Naive thymus-derived CD4-positive, alpha-beta T cell (primary cell): ENCODE measurements at regions of chr7 and their contacts with region 1.

Region 1: GRCh38 chr7:152436111-152436930 is 518 bp upstream of the KMT2C start:
- DNase-seq: peak; percentile 79 to 92 (median 87)
- ATAC-seq: peak; percentile 87
- H3K4me3 ChIP-seq: peak overlapping the region; percentile 75
- H3K4me3 Mint-ChIP-seq: peak overlapping the region; percentile 79 to 93 (median 88)
- H3K27ac ChIP-seq: peak overlapping the region; percentile 97
- H3K27ac Mint-ChIP-seq: peak overlapping the region; percentile 85 to 97 (median 93)
- H3K4me1 ChIP-seq: peaks cover 5 to 7% of the 10 kb centered on the region in 2 donors
- H3K4me1 Mint-ChIP-seq: peaks cover 15 to 35% (median 24%) of the 10 kb centered on the region in 7 donors
- H3K27me3 ChIP-seq: no peaks in the 10 kb centered on the region
- H3K27me3 Mint-ChIP-seq: no peaks in the 10 kb centered on the region

Region 2: DNA sequence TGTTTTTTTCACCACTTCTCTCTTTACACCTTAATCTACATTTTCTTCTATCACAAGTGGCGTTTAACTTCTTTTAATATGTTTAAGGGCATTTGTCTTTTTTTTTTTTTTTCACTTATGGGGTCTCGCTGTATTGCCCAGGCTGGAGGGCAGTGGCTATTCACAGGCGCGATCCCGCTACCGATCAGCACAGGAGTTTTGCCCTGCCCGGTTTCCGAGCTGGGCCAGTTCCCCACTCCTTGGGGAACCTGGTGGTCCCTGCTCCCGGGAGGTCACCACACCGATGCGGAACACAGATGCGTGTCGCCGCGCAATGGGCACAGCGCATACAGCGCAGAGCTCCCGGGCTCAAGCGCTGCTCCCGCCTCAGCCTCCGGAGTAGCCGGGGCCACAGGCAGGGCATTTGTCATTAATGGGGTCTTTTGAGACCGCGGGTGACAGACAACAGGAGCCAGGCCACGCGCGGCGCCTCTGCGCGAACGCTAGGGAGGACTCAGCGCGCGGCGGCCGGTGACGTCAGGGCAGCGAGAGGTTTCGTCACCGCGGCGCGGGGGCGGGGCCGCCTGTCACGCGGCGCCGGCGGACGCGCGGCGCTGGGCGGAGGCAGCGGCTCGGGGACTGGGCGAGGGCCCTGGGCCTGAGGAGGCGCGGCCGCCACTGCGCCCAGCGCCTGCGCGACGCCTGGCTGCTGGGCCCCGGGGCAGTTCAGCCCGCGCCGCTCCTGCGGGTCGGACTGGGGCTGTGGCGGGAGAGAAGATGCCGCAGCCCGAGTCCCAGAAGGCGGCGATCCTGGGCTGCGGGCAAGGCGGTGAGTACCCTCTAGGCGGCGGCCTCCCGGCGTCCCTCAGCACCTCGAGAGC is 411.0 kb before region 1 on chr7 and contains the start of gene GALNT11:
- CTCF ChIA-PET with region 1: no interaction called
- POLR2A ChIA-PET with region 1: no interaction called
- intact Hi-C with region 1: loop called in 1 of 2 experiments (anchors 10 kb)
- DNase-seq: peak; percentile 82 to 95 (median 91)
- ATAC-seq: peak; percentile 96
- H3K4me3 ChIP-seq: peak within 1 kb of the TSS; percentile 75
- H3K4me3 Mint-ChIP-seq: peak within 1 kb of the TSS; percentile 85 to 92 (median 88)
- H3K27ac ChIP-seq: peak within 1 kb of the TSS; percentile 88
- H3K27ac Mint-ChIP-seq: peak within 1 kb of the TSS; percentile 85 to 96 (median 95)
- H3K4me1 ChIP-seq: peaks cover 7 to 22% of the 10 kb centered on the region in 2 donors
- H3K4me1 Mint-ChIP-seq: peaks cover 12 to 45% (median 39%) of the 10 kb centered on the region in 7 donors
- H3K27me3 ChIP-seq: no peaks in the 10 kb centered on the region
- H3K27me3 Mint-ChIP-seq: peaks cover 0 to 11% (median 0%) of the 10 kb centered on the region in 5 donors
- total RNA-seq, gene GALNT11: 16.0 to 29.5 (median 17.9) TPM

Region 3: GRCh38 chr7:152383341-152384234 is 52.7 kb before region 1 on chr7:
- CTCF ChIA-PET with region 1: no interaction called
- POLR2A ChIA-PET with region 1: no interaction called
- intact Hi-C with region 1: loop called in 1 of 2 experiments (anchors 5 kb)
- DNase-seq: no peak
- ATAC-seq: peak; percentile 53
- H3K4me3 ChIP-seq: no peak overlapping the region
- H3K4me3 Mint-ChIP-seq: no peak overlapping the region
- H3K27ac ChIP-seq: no peak overlapping the region
- H3K27ac Mint-ChIP-seq: no peak overlapping the region
- H3K4me1 ChIP-seq: no peaks in the 10 kb centered on the region
- H3K4me1 Mint-ChIP-seq: peaks cover 4 to 37% (median 23%) of the 10 kb centered on the region in 7 donors
- H3K27me3 ChIP-seq: no peaks in the 10 kb centered on the region
- H3K27me3 Mint-ChIP-seq: no peaks in the 10 kb centered on the region

Region 4: DNA sequence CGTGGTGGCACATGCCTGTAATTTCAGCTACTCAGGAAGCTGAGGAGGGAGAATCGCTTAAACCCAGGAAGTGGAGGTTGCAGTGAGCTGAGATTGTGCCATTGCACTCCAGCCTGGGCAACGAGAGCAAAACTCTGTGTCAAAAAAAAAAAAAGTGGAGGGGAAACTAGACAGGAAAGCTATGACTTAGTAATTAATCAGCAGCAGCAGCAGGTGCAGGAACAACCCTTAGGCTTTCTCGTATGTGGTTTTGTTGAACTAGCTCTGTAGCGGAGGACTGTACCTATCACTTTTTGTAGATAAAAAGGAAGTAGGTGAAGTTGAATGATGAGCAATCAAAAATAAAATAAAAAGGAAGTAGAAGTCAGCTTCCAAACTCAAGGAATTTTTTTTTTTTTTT is 76.4 kb after region 1 on chr7:
- CTCF ChIA-PET with region 1: no interaction called
- POLR2A ChIA-PET with region 1: no interaction called
- intact Hi-C with region 1: loop called in 1 of 2 experiments (anchors 1 kb)
- DNase-seq: peak in 7 of 9 donors; percentile 19 to 54 (median 31)
- ATAC-seq: peak; percentile 79
- H3K4me3 ChIP-seq: peak overlapping the region; percentile 39
- H3K4me3 Mint-ChIP-seq: peak overlapping the region; percentile 58 to 87 (median 78)
- H3K27ac ChIP-seq: peak overlapping the region; percentile 2
- H3K27ac Mint-ChIP-seq: peak overlapping the region in 7 of 9 donors; percentile 15 to 77 (median 51)
- H3K4me1 ChIP-seq: peaks cover 0 to 4% of the 10 kb centered on the region in 2 donors
- H3K4me1 Mint-ChIP-seq: peaks cover 4 to 20% (median 13%) of the 10 kb centered on the region in 7 donors
- H3K27me3 ChIP-seq: no peaks in the 10 kb centered on the region
- H3K27me3 Mint-ChIP-seq: peaks cover 0 to 4% (median 0%) of the 10 kb centered on the region in 5 donors

Region 5: DNA sequence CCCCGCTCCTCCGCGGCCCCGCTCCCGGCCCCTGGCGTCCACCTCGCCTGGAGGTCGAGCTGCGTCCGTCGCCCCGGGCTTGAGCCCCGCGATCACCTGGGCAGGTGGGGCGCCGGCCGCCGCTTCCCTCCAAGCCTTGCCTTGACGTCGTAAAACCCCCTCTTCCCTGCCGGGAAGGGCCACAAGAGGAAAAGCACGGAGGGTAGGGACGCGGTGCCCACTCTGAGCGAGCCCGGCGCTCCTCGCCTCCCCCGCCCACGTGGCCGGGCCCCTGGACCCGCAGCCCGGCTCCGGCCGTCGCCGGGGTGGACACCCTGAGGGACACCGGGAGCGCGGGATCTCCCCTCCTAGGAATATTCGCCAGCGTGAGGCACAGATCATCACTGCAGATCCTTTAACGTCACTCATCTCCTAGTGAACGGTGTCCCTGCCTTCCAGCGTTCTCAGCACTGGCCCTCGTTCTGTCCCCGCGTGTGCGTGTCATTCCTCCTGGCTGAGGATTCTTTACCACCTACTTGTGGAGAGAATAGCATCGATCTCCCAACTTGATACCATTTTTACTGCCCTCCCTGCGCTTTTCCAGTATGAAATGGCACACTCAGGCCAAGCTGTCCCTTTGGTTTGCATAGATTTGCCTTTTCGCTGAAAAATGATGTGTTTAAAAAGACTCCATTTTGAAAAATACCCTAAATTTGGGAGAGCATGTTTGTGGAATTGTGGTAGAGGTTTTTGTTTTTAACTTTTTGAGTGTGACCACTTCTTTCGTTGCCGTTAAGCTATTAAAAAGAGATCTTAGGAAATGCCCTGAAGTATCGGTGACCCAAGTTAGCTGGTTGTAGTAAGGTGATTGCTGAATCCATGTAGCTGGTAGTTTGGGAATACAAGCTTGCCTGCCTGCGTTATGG is 323.9 kb after region 1 on chr7:
- CTCF ChIA-PET with region 1: no interaction called
- POLR2A ChIA-PET with region 1: no interaction called
- intact Hi-C with region 1: loop called (anchors 1 kb)
- DNase-seq: peak in 5 of 9 donors; percentile 12 to 53 (median 22)
- ATAC-seq: peak; percentile 26
- H3K4me3 ChIP-seq: peak overlapping the region; percentile 68
- H3K4me3 Mint-ChIP-seq: peak overlapping the region; percentile 85 to 94 (median 90)
- H3K27ac ChIP-seq: peak overlapping the region; percentile 93
- H3K27ac Mint-ChIP-seq: peak overlapping the region; percentile 63 to 97 (median 88)
- H3K4me1 ChIP-seq: peaks cover 6 to 11% of the 10 kb centered on the region in 2 donors
- H3K4me1 Mint-ChIP-seq: peaks cover 9 to 27% (median 20%) of the 10 kb centered on the region in 7 donors
- H3K27me3 ChIP-seq: no peaks in the 10 kb centered on the region
- H3K27me3 Mint-ChIP-seq: peaks cover 0 to 3% (median 0%) of the 10 kb centered on the region in 5 donors